Activated T-helper 1 cell treated with anti-CD3 and anti-CD28 coated beads, Interleukin-12 subunit alpha, Interleukin-12 subunit beta, Interleukin-2, Interleukin-4 antibody, amounts not matched to agents 30 ng/mL and 10 ng/mL and 1 ng/mL, durations not matched to agents 14 hours and 24 hours and 36 hours (primary cell): ENCODE measurements at regions of chr2 and their contacts with region 1.

Region 1: DNA sequence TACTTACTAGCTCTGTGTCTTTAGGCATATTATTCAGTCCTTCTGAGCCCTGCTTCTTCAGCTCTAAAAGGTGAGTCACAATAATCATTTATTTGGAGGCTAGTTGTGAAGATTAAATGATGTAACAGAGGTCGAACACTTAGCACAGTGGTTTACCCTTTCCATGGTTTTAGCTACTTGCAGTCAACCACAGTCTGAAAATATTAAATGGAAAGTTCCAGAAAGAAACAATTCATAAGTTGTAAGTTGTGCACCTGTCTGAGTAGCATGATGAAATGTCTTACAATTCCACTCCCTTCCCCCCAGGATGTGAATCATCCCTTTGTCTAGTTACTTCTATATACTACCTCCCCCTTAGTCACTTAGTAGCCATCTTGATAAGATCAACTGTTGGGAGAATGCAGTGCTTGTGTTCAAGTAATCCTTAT is 217.6 kb upstream of the THUMPD2 start:
- DNase-seq: no peak
- H3K4me3 Mint-ChIP-seq: no peak overlapping the region
- H3K27ac Mint-ChIP-seq: peak overlapping the region; percentile 18
- H3K4me1 Mint-ChIP-seq: peaks cover 17% of the 10 kb centered on the region
- H3K27me3 Mint-ChIP-seq: peaks cover 1% of the 10 kb centered on the region

Region 2: GRCh38 chr2:38427936-38428335 is 1568.7 kb before region 1 on chr2:
- intact Hi-C with region 1: no loop called
- DNase-seq: no peak
- H3K4me3 Mint-ChIP-seq: no peak overlapping the region
- H3K27ac Mint-ChIP-seq: no peak overlapping the region
- H3K4me1 Mint-ChIP-seq: no peaks in the 10 kb centered on the region
- H3K27me3 Mint-ChIP-seq: peaks cover 7% of the 10 kb centered on the region

Region 3: GRCh38 chr2:39805936-39806608 is 190.6 kb before region 1 on chr2:
- intact Hi-C with region 1: no loop called
- DNase-seq: no peak
- H3K4me3 Mint-ChIP-seq: no peak overlapping the region
- H3K27ac Mint-ChIP-seq: no peak overlapping the region
- H3K4me1 Mint-ChIP-seq: no peaks in the 10 kb centered on the region
- H3K27me3 Mint-ChIP-seq: peaks cover 2% of the 10 kb centered on the region

Region 4: DNA sequence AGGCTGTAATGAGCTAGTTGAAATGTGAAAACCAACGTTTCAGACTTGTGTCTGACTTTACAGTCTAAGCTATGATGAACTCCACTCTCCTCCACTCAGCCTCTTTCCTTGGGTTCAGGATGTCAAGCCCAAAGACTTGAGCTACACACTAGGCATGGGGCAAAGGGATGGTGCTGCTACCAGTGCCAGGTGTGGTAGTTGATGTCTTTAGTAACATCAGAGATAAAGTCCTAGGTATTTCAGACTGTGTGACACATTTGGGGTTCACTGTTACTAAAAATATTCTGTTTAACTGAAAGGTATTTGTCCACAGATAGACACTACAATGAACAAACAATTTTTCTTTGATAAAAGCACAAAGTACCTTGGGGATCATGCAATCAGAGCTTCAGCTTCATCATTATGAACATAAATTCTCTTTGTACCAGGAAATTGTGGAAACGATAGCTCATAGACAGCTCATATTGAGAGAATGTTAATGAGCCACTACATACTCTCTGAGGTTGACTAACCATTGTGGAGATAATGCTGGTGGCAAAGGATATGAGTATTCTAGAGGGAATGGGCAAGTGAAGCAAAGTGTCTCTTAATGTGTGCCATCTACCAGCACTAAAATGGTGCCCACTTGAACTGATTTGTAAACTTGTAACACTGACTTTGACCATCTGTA is 36.1 kb after region 1 on chr2:
- intact Hi-C with region 1: loop called (anchors 2 kb)
- DNase-seq: no peak
- H3K4me3 Mint-ChIP-seq: no peak overlapping the region
- H3K27ac Mint-ChIP-seq: peak overlapping the region; percentile 54
- H3K4me1 Mint-ChIP-seq: peaks cover 9% of the 10 kb centered on the region
- H3K27me3 Mint-ChIP-seq: no peaks in the 10 kb centered on the region

Region 5: GRCh38 chr2:40095000-40095399 is 98.3 kb after region 1 on chr2:
- intact Hi-C with region 1: no loop called
- DNase-seq: no peak
- H3K4me3 Mint-ChIP-seq: no peak overlapping the region
- H3K27ac Mint-ChIP-seq: no peak overlapping the region
- H3K4me1 Mint-ChIP-seq: no peaks in the 10 kb centered on the region
- H3K27me3 Mint-ChIP-seq: no peaks in the 10 kb centered on the region

Region 6: DNA sequence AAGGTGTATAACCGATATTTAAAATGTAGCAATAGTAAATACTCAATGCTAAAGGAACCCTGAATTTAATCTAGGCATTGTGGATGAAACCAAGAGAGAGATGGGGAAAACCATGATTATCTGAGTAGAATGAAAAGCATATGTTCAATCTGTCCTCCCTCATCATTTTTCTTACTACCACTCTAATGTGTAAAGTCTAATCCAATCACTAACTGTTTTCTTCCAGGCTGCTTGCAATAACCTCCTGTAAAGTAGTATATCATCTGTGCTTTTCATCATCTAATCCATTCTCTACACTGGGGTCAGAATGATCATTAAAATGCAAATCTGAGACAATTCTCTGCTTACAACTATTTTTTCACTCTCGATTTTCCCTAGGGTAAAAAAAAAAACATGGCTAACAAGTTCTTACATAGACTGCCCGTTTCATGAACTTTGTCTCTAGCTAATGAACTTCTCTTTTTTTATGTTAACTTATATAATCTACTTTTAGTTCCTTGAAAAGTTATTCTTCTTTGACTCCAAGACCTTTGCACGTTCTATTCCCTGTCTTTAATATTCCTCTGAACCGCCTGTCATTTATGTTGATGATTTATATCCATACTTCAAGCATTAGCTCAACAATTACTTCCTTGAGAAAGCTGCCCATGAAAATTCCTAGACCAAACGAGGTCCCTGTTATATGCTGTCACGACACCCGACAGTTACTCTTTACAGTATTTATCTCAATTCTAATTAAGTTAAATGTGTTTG is 549.9 kb after region 1 on chr2:
- intact Hi-C with region 1: no loop called
- DNase-seq: no peak
- H3K4me3 Mint-ChIP-seq: no peak overlapping the region
- H3K27ac Mint-ChIP-seq: no peak overlapping the region
- H3K4me1 Mint-ChIP-seq: no peaks in the 10 kb centered on the region
- H3K27me3 Mint-ChIP-seq: peaks cover 2% of the 10 kb centered on the region